ENCODE measurements at regions of chr17 and their contacts with region 1.

Region 1: DNA sequence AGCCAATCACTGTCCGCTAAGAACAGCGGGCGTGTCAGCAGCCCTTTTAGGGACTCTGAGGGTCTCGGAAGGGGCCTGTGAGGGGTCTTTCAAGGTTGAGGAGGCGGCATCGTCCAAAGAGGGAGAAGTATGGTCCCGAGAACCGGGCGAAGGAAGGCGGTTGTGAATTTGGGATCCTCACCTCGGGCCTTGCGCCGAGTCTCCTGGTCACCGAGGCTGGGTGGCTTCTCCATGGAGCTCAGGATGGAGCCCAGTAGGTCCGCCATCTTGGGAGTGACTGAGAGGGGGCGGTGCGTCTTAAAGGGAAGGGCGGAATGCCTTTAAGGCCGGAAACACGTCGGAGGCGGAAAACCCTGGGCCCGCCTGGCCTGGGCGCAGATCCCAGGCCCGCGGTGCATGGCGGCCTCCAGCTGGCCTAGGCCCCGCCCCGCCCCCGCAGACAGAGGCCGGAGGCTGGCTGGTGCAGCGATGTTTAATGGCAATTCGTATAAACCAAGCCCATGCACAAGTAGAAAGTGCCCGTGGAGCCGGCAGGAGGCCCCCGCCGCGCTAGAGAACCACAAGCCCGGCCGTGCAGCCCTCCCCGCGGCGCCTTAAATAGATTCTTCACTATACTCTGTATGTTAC is at the start of gene SPAG7:
- DNase-seq: peak; percentile 95 to 96 (median 95)
- ATAC-seq: peak; percentile 77 to 88 (median 86)
- H3K4me3 ChIP-seq: peak within 1 kb of the TSS; percentile 35 to 83 (median 70)
- H3K27ac ChIP-seq: peak within 1 kb of the TSS; percentile 89 to 99 (median 96)
- H3K4me1 ChIP-seq: peaks cover 0 to 46% (median 31%) of the 10 kb centered on the region in 12 donors
- H3K27me3 ChIP-seq: no peaks in the 10 kb centered on the region
- CTCF ChIP-seq: peak in 6 of 12 donors; percentile 8 to 25 (median 18)
- POLR2A ChIP-seq: peak in 1 of 2 donors; percentile 68
- total RNA-seq, gene SPAG7: 88.7 to 149 (median 125) TPM

Region 2: DNA sequence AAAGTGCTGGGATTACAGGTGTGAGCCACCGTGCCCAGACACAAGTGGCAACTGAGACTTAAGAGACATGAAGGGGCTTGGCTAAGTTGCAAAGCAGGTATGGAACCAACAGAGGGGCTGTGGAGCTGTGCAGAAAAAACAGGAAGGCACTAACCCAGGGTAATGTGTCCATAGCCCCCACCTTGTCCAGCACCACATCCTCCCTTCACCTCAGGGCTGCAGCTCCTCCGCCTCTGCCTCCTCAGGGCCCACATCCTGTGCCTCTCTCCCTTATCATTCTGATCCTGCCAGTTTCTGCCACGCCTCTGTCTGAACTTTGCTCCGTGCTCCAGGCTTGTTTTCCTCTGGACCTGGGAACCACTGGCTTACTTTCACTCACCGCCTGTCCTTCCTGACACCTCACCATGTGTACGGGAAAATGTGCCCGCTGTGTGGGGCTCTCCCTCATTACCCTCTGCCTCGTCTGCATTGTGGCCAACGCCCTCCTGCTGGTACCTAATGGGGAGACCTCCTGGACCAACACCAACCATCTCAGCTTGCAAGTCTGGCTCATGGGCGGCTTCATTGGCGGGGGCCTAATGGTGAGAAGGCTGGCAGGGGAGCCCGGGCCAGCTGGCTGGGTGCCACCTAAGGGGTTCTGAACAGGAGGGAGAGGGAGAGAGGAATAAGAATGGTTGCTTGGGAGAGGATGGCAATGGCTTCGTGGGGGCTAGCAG is 196.0 kb before region 1 on chr17 and contains the start of gene TM4SF5:
- intact Hi-C with region 1: no loop called
- DNase-seq: no peak
- ATAC-seq: peak in 1 of 4 donors; percentile 16
- H3K4me3 ChIP-seq: no peak within 1 kb of the TSS
- H3K27ac ChIP-seq: peak within 1 kb of the TSS in 1 of 12 donors; percentile 63
- H3K4me1 ChIP-seq: peaks cover 0 to 27% (median 0%) of the 10 kb centered on the region in 12 donors
- H3K27me3 ChIP-seq: peaks cover 0 to 13% (median 0%) of the 10 kb centered on the region in 9 donors
- CTCF ChIP-seq: no peak
- POLR2A ChIP-seq: no peak
- total RNA-seq, gene TM4SF5: not detected

Region 3: GRCh38 chr17:4908301-4908700 is 59.4 kb before region 1 on chr17:
- intact Hi-C with region 1: loop called in 1 of 10 experiments (anchors 5 kb)
- DNase-seq: no peak
- ATAC-seq: peak in 2 of 4 donors; percentile 41 to 48
- H3K4me3 ChIP-seq: no peak overlapping the region
- H3K27ac ChIP-seq: peak overlapping the region in 9 of 12 donors; percentile 1 to 75 (median 60)
- H3K4me1 ChIP-seq: peaks cover 0 to 20% (median 10%) of the 10 kb centered on the region in 12 donors
- H3K27me3 ChIP-seq: no peaks in the 10 kb centered on the region
- CTCF ChIP-seq: no peak
- POLR2A ChIP-seq: no peak

Region 4: GRCh38 chr17:4919511-4920047 is 48.1 kb before region 1 on chr17:
- intact Hi-C with region 1: loop called in 1 of 10 experiments (anchors 5 kb)
- DNase-seq: no peak
- ATAC-seq: no peak
- H3K4me3 ChIP-seq: no peak overlapping the region
- H3K27ac ChIP-seq: no peak overlapping the region
- H3K4me1 ChIP-seq: peaks cover 0 to 9% (median 0%) of the 10 kb centered on the region in 12 donors
- H3K27me3 ChIP-seq: no peaks in the 10 kb centered on the region
- CTCF ChIP-seq: no peak
- POLR2A ChIP-seq: no peak

Region 5: GRCh38 chr17:4939796-4940624 is 27.6 kb before region 1 on chr17 and contains the starts of genes RNF167 and SLC25A11:
- intact Hi-C with region 1: loop called in 2 of 10 experiments (anchors 1 to 5 kb)
- DNase-seq: peak; percentile 94 to 97 (median 95)
- ATAC-seq: peak; percentile 91 to 95 (median 94)
- H3K4me3 ChIP-seq: peak within 1 kb of the TSS; percentile 76 to 98 (median 88)
- H3K27ac ChIP-seq: peak within 1 kb of the TSS; percentile 91 to 100 (median 97)
- H3K4me1 ChIP-seq: peaks cover 11 to 57% (median 33%) of the 10 kb centered on the region in 12 donors
- H3K27me3 ChIP-seq: no peaks in the 10 kb centered on the region
- CTCF ChIP-seq: peak in 2 of 12 donors; percentile 6 to 10
- POLR2A ChIP-seq: peak in 1 of 2 donors; percentile 86
- total RNA-seq, gene RNF167: 50.7 to 111 (median 79.6) TPM
- total RNA-seq, gene SLC25A11: 146 to 282 (median 204) TPM

Region 6: DNA sequence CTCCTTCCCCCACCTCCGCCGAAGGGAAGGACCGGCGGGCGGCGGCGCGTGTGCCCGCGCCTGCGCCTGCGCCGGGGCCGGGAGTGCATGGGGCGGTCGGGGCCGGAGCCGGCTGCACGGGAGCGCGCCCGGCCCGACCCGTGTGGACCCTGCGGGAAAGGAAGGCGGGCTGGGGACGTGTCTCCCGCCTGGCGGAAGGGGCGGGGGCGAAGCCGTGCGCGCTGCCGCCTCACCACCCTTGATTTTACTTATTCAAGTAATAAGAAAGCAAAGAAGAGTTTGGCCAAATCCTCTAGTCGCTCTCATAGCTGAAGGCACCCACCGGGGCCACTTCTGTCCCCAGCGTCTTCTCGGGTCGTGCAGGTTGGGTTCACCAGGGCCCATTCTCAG is 18.7 kb before region 1 on chr17:
- intact Hi-C with region 1: loop called in 7 of 10 experiments (anchors 1 to 2 kb)
- DNase-seq: peak; percentile 88 to 92 (median 90)
- ATAC-seq: peak; percentile 64 to 82 (median 78)
- H3K4me3 ChIP-seq: peak overlapping the region; percentile 73 to 100 (median 98)
- H3K27ac ChIP-seq: peak overlapping the region; percentile 96 to 100 (median 99)
- H3K4me1 ChIP-seq: peaks cover 11 to 79% (median 44%) of the 10 kb centered on the region in 12 donors
- H3K27me3 ChIP-seq: no peaks in the 10 kb centered on the region
- CTCF ChIP-seq: no peak
- POLR2A ChIP-seq: peak in 1 of 2 donors; percentile 62

Region 7: GRCh38 chr17:4997302-4998026 is 29.8 kb after region 1 on chr17 and contains the starts of genes INCA1 and KIF1C:
- intact Hi-C with region 1: loop called in 2 of 10 experiments (anchors 1 kb)
- DNase-seq: peak; percentile 95 to 98 (median 96)
- ATAC-seq: peak; percentile 63 to 90 (median 88)
- H3K4me3 ChIP-seq: peak within 1 kb of the TSS; percentile 66 to 100 (median 94)
- H3K27ac ChIP-seq: peak within 1 kb of the TSS; percentile 92 to 99 (median 95)
- H3K4me1 ChIP-seq: peaks cover 0 to 41% (median 31%) of the 10 kb centered on the region in 12 donors
- H3K27me3 ChIP-seq: no peaks in the 10 kb centered on the region
- CTCF ChIP-seq: peak in 6 of 12 donors; percentile 7 to 35 (median 27)
- POLR2A ChIP-seq: peak in 1 of 2 donors; percentile 87
- total RNA-seq, gene INCA1: 0.75 to 4.0 (median 2.7) TPM
- total RNA-seq, gene KIF1C: 335 to 868 (median 539) TPM

Region 8: GRCh38 chr17:5516060-5516792 is 548.6 kb after region 1 on chr17:
- intact Hi-C with region 1: no loop called
- DNase-seq: no peak
- ATAC-seq: peak in 1 of 4 donors; percentile 52
- H3K4me3 ChIP-seq: no peak overlapping the region
- H3K27ac ChIP-seq: peak overlapping the region in 1 of 12 donors; percentile 10
- H3K4me1 ChIP-seq: peaks cover 0 to 8% (median 0%) of the 10 kb centered on the region in 12 donors
- H3K27me3 ChIP-seq: no peaks in the 10 kb centered on the region
- CTCF ChIP-seq: no peak
- POLR2A ChIP-seq: no peak

Measured in heart left ventricle (tissue), 16 donors.